ENCODE measurements at regions of chr4 and their contacts with region 1.

Region 1: DNA sequence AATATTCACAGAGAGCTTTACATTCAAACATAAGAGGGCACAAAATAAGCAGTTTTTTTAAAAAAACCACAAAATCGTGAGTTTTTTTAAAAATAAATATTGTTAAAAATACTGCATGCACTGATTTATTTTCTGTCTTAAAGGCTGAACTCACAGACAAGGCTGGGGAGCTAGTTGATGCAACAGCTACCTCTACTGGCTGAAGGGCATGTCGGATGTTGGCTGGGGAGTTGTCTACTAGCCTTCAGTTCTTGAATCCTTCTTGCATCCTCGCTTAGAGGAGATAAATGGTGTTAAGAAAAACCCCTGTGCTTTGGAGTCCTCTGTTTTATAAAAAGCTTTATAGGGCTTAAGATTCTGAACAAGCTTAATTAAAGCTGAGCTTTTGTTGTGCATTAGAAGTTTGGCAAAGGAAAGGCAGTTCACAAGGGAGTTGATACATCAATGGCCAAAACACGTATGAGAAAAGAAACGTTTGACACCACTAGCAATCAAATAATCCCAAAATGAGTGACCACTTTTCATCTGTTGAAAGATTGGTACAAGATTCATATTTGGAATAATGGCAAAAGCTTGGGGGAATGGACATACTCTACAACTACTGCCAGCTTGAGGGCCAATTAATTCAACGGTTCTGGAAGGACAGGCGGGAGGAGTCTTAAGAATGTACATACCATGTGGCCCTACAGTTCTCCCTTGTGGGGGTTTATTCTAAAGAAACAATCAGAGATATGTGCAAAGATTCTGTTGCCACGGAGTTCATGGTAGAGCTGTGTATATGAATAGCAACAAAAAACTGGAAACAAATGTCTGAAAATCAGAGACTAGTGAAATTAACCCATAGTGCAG is 94.7 kb downstream of the SEL1L3 start:
- DNase-seq: no peak
- H3K4me3 Mint-ChIP-seq: no peak overlapping the region
- H3K27ac Mint-ChIP-seq: no peak overlapping the region
- H3K4me1 Mint-ChIP-seq: no peaks in the 10 kb centered on the region
- H3K27me3 Mint-ChIP-seq: no peaks in the 10 kb centered on the region

Region 2: GRCh38 chr4:25439918-25440477 is 328.1 kb before region 1 on chr4:
- intact Hi-C with region 1: loop called (anchors 1 kb)
- DNase-seq: peak; percentile 49
- H3K4me3 Mint-ChIP-seq: no peak overlapping the region
- H3K27ac Mint-ChIP-seq: no peak overlapping the region
- H3K4me1 Mint-ChIP-seq: no peaks in the 10 kb centered on the region
- H3K27me3 Mint-ChIP-seq: peaks cover 4% of the 10 kb centered on the region

Region 3: DNA sequence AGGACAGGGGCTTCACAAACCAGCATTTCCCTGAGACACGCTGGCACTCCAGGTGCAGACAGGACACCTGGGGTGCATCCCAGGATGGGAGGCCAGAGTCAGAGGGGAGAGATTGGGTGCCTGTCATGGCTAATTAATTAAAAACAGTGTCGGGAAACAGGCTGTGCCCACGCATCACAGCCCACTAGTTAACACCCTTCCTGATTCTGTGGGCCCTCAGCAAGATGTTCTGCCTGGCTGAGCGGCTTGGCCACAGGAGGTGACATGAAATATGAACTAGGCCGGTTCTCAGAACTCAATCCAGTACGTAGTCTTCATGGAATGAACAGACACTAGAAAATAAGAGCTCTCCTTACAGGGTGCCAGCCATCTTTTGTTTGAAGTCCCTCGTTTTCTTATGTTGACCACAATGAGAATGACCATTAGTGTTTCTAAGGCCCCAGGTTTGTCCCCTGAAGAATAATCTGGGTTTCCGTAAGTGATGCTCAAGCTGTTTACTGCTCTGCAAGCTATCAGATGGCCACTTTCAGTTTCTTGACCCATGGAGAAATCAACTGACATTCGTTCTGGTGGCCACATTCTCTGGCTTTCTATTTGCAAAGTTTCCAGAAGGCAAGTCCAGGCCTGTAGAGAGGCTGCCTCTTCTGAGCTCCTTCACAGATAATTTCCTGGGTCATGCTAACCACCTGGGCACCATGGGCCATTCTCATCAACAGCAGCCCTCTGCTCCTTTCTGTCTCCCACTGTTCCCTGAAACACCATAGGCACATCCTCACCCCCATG is 40.2 kb before region 1 on chr4:
- intact Hi-C with region 1: no loop called
- DNase-seq: no peak
- H3K4me3 Mint-ChIP-seq: no peak overlapping the region
- H3K27ac Mint-ChIP-seq: no peak overlapping the region
- H3K4me1 Mint-ChIP-seq: no peaks in the 10 kb centered on the region
- H3K27me3 Mint-ChIP-seq: no peaks in the 10 kb centered on the region

Measured in activated T-helper 1 cell treated with anti-CD3 and anti-CD28 coated beads, Interleukin-12 subunit alpha, Interleukin-12 subunit beta, Interleukin-2, Interleukin-4 antibody, amounts not matched to agents 30 ng/mL and 10 ng/mL and 1 ng/mL, durations not matched to agents 14 hours and 24 hours and 36 hours (primary cell).